ENCODE measurements at regions of chr2 and their contacts with region 1.

Region 1: DNA sequence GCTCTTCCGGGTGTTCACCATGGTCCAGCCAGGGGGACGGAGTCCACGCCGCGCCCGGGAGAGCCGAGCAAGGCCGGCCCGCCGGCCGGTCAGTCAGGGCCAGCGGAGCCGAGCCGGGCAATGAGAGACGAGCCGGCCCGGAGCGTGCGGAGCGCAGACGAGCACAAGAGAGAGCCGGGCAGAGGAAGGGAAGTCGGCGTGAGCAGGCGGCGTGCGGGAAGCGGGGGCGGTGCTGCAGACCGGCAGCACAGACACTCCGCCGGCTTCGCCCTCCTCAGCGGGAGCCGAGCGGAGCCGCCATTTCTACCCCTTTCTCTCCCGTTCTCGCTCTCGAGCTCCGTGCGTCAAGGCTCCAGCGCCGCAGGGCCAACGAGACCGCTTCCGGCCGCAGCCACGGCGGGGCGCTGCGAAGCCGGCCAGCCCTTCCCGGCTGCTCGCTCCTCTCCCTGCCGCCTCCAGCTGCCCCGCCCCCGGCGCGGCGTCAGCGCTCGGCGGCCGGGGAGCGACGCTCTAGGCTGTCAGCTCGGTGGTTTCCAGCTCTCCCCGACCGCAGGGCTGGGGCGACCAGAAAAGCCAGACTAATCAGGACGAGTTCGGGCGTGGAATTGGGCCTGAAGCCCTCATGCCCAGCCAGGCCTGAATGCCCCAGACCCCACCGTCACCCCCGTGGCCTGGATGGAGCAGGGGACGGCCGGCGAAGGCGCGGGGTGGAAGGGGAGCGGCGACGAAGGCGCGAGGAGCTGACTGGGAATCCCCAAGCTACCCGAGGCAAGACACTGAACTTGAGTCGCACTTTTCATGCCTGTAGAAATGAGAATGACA is at the start of gene ATAD2B:
- DNase-seq: peak; percentile 76 to 95 (median 88)
- H3K4me3 ChIP-seq: peak within 1 kb of the TSS; percentile 73 to 98 (median 92)
- H3K27ac ChIP-seq: peak within 1 kb of the TSS; percentile 87 to 99 (median 97)
- H3K27me3 ChIP-seq: no peaks in the 10 kb centered on the region
- CTCF ChIP-seq: peak; percentile 54 to 97 (median 87)
- total RNA-seq, gene ATAD2B: 15.1 to 34.2 (median 24.3) TPM

Region 2: DNA sequence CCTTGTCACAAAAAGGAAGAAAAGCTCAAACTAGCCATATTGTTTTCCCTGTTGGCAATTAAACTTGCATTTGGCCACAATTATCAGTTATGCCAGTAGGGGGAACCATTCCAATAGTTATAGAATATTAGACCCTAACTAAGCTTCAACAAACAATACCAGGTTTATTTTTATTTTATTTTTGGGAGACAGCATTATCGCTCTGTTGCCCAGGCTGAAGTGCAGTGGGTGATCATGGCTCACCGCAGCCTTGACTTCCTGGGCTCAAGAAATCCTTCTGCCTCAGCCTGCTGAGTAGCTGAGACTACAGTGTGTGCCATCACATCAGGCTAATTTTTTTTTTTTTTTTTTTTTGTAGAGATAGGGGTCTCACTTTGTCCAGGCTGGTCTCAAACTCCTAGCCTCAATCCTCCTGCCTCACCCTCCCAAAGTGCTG is 102.2 kb before region 1 on chr2:
- intact Hi-C with region 1: loop called in 1 of 2 experiments (anchors 10 kb)
- DNase-seq: no peak
- H3K4me3 ChIP-seq: no peak overlapping the region
- H3K27ac ChIP-seq: no peak overlapping the region
- H3K27me3 ChIP-seq: no peaks in the 10 kb centered on the region
- CTCF ChIP-seq: peak; percentile 35 to 84 (median 72)

Region 3: DNA sequence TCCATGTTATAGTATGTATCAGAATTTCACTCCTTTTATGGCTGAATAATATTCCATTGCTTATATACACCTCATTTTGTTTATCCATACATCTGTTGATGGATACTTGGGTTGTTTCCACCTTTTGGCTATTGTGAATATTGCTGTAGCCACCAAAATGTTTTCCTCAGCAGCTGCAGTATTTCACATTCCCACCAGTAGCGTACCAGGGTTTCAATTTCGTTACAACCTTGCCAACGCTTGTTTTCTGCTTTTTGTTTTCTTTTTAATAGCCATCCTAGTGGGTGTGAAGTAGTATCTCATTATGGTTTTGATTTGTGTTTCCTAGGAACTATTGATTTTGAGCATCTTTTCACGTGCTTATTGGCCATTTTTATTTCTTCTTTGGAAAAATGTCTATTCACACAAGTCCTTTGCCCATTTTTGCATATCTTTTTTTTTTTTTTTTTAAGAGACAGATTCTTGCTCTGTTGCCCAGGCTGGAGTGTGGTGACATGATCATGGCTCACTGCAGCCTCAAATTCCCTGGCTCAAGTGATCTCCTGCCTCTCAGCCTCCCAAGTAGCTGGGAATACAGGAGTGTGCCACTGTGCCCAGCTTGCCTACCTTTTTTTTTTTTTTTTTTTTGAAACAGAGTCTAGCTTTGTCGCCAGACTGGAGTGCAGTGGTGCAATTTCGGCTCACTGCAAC is 27.5 kb after region 1 on chr2:
- intact Hi-C with region 1: no loop called
- DNase-seq: no peak
- H3K4me3 ChIP-seq: peak overlapping the region in 1 of 59 donors; percentile 14
- H3K27ac ChIP-seq: no peak overlapping the region
- H3K27me3 ChIP-seq: no peaks in the 10 kb centered on the region
- CTCF ChIP-seq: no peak

Region 4: DNA sequence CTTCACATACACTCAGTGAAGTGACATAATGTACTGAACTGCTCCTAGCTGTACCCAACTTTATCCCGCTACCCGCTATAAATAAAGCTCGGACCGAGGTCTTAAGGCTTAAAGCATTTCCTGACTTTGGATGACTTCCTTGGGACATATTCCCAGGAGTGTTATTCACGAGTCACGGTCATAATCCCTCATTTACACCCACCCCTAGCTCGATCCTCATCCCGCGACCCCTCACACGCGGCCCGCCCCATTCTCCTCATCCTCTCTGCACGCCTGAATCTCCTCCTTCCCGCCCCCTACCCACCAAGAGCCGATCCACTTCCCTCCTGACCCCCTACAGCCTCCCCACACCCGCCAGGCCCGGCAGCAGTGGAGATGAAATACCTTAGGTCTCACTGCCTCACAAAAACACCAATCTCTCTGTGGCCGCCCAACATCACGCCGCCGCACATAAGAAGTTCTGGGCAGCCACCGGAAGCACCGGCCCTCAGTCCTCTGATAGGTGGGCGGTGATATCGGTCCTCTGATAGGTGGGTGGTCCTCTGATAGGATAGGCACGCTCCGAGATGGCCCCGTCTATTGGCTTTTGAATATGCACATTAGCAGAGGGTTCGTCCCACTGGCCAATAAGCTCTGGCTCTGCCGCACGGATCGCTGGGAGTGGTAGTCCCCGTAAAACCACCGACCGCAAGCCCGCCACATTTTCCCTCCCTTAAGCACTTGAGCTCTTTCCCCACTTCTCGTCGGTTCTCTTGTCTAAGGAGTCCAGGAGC is 120.2 kb after region 1 on chr2 and contains the start of gene WDCP:
- intact Hi-C with region 1: loop called (anchors 2 to 10 kb)
- DNase-seq: peak; percentile 90 to 100 (median 98)
- H3K4me3 ChIP-seq: peak within 1 kb of the TSS; percentile 40 to 93 (median 80)
- H3K27ac ChIP-seq: peak within 1 kb of the TSS in 40 of 59 donors; percentile 3 to 85 (median 62)
- H3K27me3 ChIP-seq: no peaks in the 10 kb centered on the region
- CTCF ChIP-seq: peak in 18 of 56 donors; percentile 4 to 46 (median 20)
- total RNA-seq, gene WDCP: 5.7 to 17.2 (median 10.7) TPM

Region 5: DNA sequence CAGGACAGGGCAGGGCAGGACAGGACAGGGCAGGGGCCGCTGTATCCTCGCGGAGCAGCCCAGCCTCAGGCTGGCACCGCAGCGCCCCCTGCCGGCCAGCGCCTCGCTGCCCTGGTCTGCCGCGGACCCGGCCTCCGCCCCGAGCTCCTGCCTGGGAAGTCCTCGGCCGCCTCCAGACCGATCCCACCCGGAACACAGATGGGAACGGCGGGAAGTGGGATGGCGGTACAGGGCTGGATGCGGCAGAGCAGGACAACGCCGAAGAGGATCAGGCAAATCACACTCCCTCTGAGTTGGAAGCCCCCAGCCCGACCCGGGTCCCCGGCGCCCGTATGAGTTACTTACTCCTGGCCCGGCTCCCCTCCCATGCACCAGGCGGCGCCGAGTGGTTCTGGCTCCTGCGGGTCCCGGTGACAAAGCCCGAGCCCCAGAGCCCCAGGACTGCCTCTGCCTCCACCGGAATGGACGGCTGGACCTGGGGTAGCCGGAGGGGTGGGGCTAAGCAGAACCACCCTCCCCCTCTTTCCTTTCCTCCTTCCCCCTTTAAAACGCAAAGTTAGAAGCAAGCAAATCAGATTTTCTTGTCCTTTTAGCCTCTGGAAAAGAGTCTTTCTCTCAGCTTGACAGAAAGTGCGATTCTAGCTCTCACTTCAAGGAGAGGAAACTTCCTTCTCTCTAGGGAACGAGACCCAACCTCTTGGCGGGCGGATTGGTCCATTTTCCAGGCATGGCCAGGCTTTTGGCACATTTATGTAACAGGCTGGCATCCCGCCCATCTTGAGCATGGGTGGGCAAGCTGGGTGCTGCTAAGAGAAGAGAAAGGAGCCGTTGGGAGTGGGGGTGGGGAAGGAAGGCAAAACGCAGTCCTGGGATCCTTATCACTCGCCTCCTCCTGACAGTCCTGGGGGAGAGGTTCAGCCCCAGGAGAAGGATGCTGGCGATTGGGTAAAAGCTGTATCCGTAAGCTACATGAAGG is 157.7 kb after region 1 on chr2 and contains the start of gene TP53I3:
- intact Hi-C with region 1: loop called (anchors 2 kb)
- DNase-seq: peak; percentile 59 to 89 (median 77)
- H3K4me3 ChIP-seq: peak within 1 kb of the TSS; percentile 39 to 81 (median 68)
- H3K27ac ChIP-seq: peak within 1 kb of the TSS in 57 of 59 donors; percentile 30 to 90 (median 80)
- H3K27me3 ChIP-seq: no peaks in the 10 kb centered on the region
- CTCF ChIP-seq: peak; percentile 68 to 99 (median 92)
- total RNA-seq, gene TP53I3: 0.39 to 11.1 (median 4.0) TPM

Region 6: GRCh38 chr2:24360050-24360962 is 433.3 kb after region 1 on chr2 and contains the start of gene ITSN2:
- intact Hi-C with region 1: loop called in 1 of 2 experiments (anchors 10 kb)
- DNase-seq: peak; percentile 57 to 84 (median 69)
- H3K4me3 ChIP-seq: peak within 1 kb of the TSS; percentile 64 to 100 (median 95)
- H3K27ac ChIP-seq: peak within 1 kb of the TSS; percentile 64 to 98 (median 93)
- H3K27me3 ChIP-seq: no peaks in the 10 kb centered on the region
- CTCF ChIP-seq: peak in 7 of 56 donors; percentile 8 to 38 (median 16)
- total RNA-seq, gene ITSN2: 46.9 to 77.8 (median 58.7) TPM